HEK293T (cell line): ENCODE measurements at regions of chrX and their contacts with region 1.

Region 1: GRCh38 chrX:103629318-103630170 is 769 bp downstream of the TCEAL1 start:
- DNase-seq: peak; percentile 82

Region 2: GRCh38 chrX:103362504-103362903 is 267.0 kb before region 1 on chrX:
- CTCF ChIA-PET with region 1: no interaction called
- POLR2A ChIA-PET with region 1: no interaction called
- DNase-seq: no peak

Region 3: DNA sequence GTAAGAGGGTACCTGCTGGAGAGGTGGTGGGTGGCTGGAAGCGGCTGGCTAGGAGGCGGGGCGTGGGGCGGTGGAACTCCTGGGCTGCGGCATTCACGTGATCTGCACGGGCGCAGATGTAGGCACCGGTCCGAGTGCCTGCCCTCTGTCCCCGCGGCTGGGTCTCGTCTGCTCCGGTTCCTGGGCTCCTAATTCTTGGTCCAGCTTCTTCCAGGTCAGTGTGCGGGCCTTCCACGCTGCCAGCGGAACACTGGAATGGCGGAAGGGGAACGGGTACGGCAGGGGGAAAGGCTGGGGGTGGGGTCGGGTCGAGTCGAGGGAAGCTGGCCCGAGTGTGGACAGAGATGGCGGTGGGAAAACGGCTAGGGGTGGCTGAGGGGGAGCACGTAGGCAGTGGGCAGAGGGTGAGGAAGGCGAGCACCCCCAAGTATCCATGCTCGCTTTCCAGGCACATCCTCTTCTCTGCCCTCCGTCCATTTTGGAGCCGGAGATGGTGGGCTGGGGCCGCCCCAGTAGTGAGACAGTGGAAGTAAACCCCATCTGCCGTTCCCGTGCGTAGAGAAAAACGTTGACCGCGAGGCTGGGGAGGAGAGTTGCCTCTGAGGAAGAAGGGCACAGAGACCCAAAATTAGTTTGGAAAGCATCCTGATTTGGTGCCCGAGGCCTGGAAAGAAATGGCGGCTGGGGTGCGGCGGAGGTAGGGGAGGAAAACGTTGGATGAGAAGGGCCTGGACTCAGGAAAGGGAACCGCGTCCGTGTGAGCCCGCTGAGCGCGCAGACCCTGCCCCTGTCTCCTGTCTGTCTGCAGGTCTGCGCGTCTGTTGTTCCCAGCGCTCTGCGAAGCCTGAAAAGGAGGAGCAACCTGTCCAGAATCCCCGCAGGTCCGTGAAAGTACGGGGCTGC is 43.9 kb before region 1 on chrX and contains the start of gene TCEAL4:
- CTCF ChIA-PET with region 1: interaction called, 4 read pairs
- POLR2A ChIA-PET with region 1: interaction called, 14 read pairs
- DNase-seq: peak; percentile 76

Region 4: GRCh38 chrX:103614992-103615391 is 14.6 kb before region 1 on chrX:
- CTCF ChIA-PET with region 1: interaction called, 4 read pairs
- POLR2A ChIA-PET with region 1: interaction called, 12 read pairs
- DNase-seq: no peak

Region 5: DNA sequence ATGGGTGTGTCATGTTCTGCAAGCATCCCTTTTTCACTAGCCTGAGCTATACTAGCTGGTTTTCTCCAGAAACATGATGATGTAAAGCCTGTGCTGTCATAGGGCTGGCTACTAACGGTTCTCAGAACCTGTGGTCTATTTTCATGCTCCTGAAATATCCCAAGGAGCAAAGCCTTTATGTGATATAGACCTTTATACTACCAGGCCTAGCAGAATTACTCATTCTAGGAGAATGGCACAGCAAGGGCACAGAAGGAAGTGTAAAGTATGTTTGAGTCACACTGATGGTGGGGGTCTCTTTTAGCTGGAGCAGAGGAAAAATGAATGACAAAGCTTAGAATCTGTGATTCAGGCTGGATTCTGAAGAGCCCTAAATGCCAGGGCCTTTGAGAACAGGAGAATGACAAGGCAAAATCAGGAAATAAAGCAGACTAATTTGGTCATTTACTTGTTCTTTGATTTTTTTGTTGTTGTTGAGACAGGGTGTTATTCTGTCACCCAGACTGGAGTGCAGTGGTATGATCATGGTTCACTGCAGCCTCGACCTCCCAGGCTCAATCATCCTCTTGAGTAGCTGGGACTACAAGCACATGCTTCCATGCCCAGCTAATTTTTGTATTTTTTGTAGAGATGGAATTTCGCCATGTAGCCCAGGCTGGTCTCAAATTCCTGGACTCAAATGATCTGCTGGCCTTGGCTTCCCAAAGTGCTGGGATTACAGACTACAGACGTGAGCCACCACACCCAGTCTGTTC is 11.0 kb after region 1 on chrX:
- CTCF ChIA-PET with region 1: interaction called, 19 read pairs
- POLR2A ChIA-PET with region 1: interaction called, 14 read pairs
- DNase-seq: no peak

Region 6: DNA sequence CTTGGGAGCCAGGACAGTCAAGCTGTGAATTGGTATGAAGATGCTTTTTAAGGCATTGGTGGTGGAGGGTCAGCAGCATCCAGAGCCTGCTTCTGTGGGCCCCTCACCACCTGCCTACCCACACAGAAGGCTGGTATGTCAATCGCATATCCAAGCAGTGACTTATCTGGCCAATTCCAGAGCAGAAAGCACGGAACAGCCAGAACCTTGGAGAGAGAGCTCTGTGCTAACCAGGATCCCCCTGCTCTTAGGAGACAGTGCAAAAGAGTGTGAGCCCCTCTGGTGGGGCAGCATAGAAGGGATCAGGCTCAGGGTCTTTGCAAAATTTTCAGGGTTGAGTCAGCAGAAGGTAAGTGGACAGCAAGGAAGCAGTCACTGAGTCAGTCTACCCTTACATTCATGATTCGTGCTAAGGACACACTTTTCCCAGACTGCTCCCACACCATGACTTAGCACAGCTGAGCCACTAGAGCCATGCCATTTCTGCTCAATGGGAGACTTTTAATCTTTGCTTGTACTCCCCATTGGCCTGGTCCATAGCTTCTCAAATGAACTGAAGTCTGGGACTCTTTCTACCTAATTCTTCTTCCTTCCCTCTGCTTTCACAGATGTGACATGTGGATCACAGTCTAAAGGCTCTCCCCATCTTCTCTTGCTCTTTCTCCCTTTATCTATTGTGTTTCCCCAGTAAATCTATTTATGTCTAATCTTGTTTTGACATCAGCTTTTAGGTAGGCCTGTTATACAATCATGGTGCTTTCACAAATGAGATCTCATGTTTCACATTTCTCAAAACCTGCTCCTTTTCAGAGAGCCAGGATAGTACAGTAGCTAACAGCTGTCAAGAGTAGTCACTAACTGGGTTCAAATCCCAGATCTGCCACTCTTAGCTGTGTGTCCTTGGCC is 36.9 kb after region 1 on chrX:
- CTCF ChIA-PET with region 1: interaction called, 5 read pairs
- POLR2A ChIA-PET with region 1: interaction called, 17 read pairs
- DNase-seq: no peak

Region 7: DNA sequence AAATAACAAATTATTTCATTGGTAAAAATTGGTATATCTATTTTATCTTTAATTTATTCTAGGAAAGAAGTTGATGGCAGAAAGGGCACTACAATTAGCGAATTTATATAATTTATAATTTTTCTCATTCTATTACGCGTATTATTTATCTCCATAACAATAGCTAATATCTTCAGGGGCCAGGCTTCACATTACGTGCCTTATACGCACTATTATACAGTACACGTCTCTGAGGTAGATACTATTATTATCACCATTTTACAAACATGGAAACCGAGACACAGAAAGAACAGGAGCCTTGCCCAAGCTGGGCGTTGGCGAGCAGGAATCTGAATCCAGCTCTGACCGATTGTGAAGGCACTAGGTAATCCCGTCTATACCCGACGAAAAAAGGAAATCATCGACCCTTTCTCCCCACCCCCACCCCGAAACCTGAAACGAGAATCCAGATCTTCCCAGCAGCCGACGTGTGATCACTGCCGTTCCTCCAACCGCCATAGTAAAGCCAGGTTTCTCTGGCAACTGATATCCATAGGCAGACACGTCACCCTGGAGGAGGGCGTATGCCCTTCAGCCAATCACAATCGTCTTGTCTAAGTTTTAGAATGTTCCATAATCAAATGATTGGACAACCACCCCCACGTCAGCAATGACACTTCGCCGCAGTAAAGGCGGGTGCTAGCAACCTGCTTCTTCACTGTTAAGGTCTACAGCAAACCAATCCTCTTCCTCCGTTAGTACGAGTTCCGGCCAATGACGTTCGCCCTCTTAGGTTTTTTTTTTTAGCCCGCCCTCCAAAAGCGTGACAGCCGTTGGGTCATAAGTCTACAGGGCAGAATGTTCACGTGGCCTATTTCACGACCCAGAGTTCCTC is 56.9 kb after region 1 on chrX and contains the start of gene MORF4L2:
- CTCF ChIA-PET with region 1: interaction called, 7 read pairs
- POLR2A ChIA-PET with region 1: interaction called, 39 read pairs
- DNase-seq: peak; percentile 91